ENCODE measurements at regions of chr7 and their contacts with region 1.

Region 1: DNA sequence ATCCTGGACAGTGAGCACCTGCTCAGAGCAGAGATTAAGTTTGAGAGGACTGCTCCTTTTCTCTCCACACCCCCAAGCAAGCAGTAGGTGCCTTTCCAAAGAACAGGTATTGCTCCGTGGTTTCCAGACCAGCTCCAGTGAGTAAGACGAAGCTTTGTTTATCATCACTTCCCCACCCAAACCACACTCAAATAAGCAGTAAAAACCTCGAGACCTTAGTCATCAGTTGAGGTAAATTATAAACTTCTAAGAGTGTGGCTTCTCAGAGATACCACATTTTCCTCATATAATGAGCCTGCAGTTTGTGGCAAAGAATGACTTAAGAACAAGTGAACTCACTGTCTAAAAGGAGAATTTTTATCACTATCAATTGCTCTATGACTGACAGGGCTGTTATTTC is 50.0 kb upstream of the GRB10 start:
- DNase-seq: peak; percentile 61 to 98
- H3K4me3 ChIP-seq: no peak overlapping the region
- H3K27ac ChIP-seq: peak overlapping the region; percentile 49
- H3K4me1 ChIP-seq: peaks cover 49% of the 10 kb centered on the region
- H3K27me3 ChIP-seq: no peaks in the 10 kb centered on the region
- CTCF ChIP-seq: no peak

Region 2: DNA sequence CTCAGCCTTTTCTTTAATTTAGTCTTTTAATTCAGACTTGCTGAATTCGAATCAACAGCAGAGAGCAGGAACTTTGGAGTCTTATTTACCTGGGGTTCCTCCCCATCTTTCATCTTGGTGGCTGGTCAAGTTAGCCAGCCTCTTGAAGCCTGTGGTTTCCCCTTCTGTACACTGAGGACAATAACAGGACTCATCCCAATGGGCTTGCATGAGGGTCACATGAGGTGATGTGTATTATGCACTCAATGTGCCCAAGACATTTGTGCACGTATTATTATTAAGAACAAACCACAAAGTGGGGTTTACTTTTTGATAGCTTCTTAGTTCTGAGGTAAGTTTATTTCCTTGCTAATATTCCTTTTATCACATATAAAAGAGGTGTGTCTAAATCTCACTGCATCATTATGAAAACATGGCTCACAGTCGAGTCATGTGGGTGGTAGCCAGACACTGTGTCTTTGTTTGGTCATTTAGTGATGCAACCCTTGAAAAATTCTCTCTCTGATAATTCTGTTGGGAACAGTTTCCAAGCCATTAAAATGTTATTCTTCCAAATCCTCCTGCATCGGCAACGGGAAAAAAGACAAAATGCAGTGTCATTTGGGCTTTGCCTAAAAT is 36.5 kb after region 1 on chr7:
- CTCF ChIA-PET with region 1: no interaction called
- POLR2A ChIA-PET with region 1: interaction called, 3 read pairs
- intact Hi-C with region 1: loop called (anchors 1 kb)
- DNase-seq: peak; percentile 21 to 77
- H3K4me3 ChIP-seq: no peak overlapping the region
- H3K27ac ChIP-seq: peak overlapping the region; percentile 52
- H3K4me1 ChIP-seq: peaks cover 22% of the 10 kb centered on the region
- H3K27me3 ChIP-seq: no peaks in the 10 kb centered on the region
- CTCF ChIP-seq: no peak